Activated T-helper 2 cell treated with anti-CD3 and anti-CD28 coated beads, Interferon-gamma antibody, Interleukin-2, Interleukin-4, amounts not matched to agents 10 μg/mL and 5 μg/mL and 100 μg/mL, durations not matched to agents 14 hours and 24 hours and 36 hours (primary cell): ENCODE measurements at regions of chr15 and their contacts with region 1.

Region 1: GRCh38 chr15:65318870-65319356 is 14.4 kb downstream of the RNU5B-1 start:
- DNase-seq: peak; percentile 66
- H3K4me3 Mint-ChIP-seq: no peak overlapping the region
- H3K27ac Mint-ChIP-seq: no peak overlapping the region
- H3K4me1 Mint-ChIP-seq: no peaks in the 10 kb centered on the region
- H3K27me3 Mint-ChIP-seq: peaks cover 10% of the 10 kb centered on the region

Region 2: GRCh38 chr15:65384895-65385858 is 66.3 kb after region 1 on chr15:
- intact Hi-C with region 1: loop called (anchors 1 kb)
- DNase-seq: peak; percentile 75
- H3K4me3 Mint-ChIP-seq: peak overlapping the region; percentile 85
- H3K27ac Mint-ChIP-seq: peak overlapping the region; percentile 85
- H3K4me1 Mint-ChIP-seq: peaks cover 4% of the 10 kb centered on the region
- H3K27me3 Mint-ChIP-seq: peaks cover 27% of the 10 kb centered on the region

Region 3: GRCh38 chr15:65516997-65517865 is 198.3 kb after region 1 on chr15 and contains the start of gene DPP8:
- intact Hi-C with region 1: no loop called
- DNase-seq: peak; percentile 93
- H3K4me3 Mint-ChIP-seq: peak within 1 kb of the TSS; percentile 99
- H3K27ac Mint-ChIP-seq: peak within 1 kb of the TSS; percentile 94
- H3K4me1 Mint-ChIP-seq: peaks cover 21% of the 10 kb centered on the region
- H3K27me3 Mint-ChIP-seq: no peaks in the 10 kb centered on the region
- total RNA-seq, gene DPP8: 32.3 and 33.8 TPM in 2 replicates